HepG2 (cell line): ENCODE measurements at regions of chr17 and their contacts with region 1.

Region 1: GRCh38 chr17:3865176-3865575 is 19.1 kb upstream of the NCBP3 start:
- DNase-seq: no peak
- ATAC-seq: no peak; the same call in 2 of the 3 replicates
- H3K4me3 ChIP-seq: no peak overlapping the region
- H3K27ac ChIP-seq: no peak overlapping the region
- H3K4me1 ChIP-seq: peaks cover 15% of the 10 kb centered on the region
- H3K27me3 ChIP-seq: no peaks in the 10 kb centered on the region
- CTCF ChIP-seq: no peak
- EP300 ChIP-seq: no peak
- POLR2A ChIP-seq: no peak
- RAD21 ChIP-seq: no peak

Region 2: DNA sequence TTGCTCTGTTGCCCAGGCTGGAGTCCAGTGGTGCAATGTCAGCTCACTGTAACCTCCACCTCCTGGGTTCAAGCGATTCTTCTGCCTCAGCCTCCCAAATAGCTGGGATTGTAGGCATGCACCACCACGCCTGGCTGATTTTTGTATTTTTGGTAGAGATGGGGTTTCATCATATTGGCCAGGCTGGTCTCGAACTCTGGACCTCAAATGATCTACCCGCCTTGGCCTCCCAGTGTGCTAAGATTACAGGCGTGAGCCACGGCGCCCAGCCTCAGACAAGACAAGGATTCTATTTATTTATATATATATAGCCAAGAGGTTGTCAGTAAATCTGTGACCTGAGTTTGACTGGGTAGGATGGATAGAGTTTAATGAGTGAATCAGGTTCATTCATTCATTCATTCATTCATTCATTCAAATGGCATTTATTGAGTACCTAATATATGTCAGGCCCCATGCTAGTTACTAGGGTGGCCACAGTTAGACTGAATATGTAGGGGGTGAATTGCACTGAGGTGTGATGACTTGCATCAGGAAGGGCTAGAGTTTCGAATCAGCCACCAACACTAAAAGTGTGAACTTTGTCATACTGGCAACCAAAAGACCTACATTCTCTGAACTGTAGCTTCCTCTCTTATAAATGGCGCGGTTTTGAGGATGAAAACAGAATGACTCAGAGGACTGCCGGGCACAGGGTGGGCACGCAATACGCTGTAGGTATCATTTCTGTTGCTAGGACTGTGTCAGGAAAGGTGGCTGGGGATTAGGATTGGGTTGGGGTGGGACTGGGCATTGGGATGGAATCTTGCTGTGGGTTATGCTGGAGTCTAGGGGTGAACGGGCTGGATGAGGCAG is 102.0 kb before region 1 on chr17:
- CTCF ChIA-PET with region 1: no interaction called
- POLR2A ChIA-PET with region 1: no interaction called
- in situ Hi-C with region 1: no loop called
- intact Hi-C with region 1: no loop called
- DNase-seq: no peak
- ATAC-seq: no peak
- H3K4me3 ChIP-seq: no peak overlapping the region
- H3K27ac ChIP-seq: no peak overlapping the region
- H3K4me1 ChIP-seq: peaks cover 49% of the 10 kb centered on the region
- H3K27me3 ChIP-seq: no peaks in the 10 kb centered on the region
- CTCF ChIP-seq: no peak
- EP300 ChIP-seq: no peak
- POLR2A ChIP-seq: no peak
- RAD21 ChIP-seq: no peak

Region 3: DNA sequence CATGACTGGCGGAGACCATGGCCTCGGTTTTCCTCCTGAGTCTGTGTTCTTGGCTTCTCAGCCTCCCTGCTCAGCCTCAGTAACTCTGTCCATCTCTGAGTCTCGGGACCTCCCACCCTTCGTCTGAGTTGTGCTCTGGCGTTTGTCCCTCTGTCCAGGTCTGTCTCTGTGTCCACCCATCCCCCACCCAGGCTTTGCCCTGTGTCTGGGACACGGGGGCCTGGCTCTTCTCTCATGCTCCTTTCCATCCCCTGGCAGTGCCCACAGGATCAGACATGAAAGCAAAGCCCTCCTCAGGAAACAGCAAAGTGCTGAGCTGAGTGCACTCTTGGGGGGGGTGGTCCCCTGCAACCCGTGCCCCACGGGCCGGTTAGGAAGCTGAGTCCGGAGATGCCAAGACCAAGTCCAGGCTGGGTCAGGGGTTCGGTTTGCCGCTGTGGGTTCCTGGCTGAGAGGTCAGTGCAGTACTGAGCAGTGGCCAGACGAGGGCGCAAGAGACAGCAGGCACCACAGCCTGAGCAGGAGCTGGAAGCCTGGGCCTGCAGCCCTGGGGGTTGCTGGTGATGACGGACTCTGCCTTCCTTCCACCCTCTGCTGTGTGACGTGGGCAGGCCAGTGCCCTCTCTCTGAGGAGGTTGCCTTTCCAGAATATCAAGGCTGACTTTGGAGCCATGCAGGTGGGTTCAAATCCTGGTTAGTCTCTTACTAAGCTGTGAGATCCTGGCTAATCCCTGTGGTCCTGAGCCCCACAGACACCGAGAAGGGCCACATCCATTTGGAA is 48.5 kb after region 1 on chr17:
- CTCF ChIA-PET with region 1: interaction called, 3 read pairs
- POLR2A ChIA-PET with region 1: no interaction called
- in situ Hi-C with region 1: loop called (anchors 5 kb)
- intact Hi-C with region 1: no loop called
- DNase-seq: peak; percentile 51
- ATAC-seq: peak; percentile 84
- H3K4me3 ChIP-seq: no peak overlapping the region
- H3K27ac ChIP-seq: no peak overlapping the region
- H3K4me1 ChIP-seq: peaks cover 32% of the 10 kb centered on the region
- H3K27me3 ChIP-seq: peaks cover 2 to 35% of the 10 kb centered on the region in 2 experiments; a peak in 4 of 5 replicates
- CTCF ChIP-seq: peak; percentile 99
- EP300 ChIP-seq: no peak
- POLR2A ChIP-seq: no peak
- RAD21 ChIP-seq: peak; percentile 94